ENCODE measurements at regions of chr2 and their contacts with region 1.

Region 1: GRCh38 chr2:85707304-85707703 is 13.1 kb downstream of the GNLY start:
- DNase-seq: peak; percentile 74
- H3K4me3 Mint-ChIP-seq: no peak overlapping the region
- H3K27ac Mint-ChIP-seq: peak overlapping the region; percentile 39
- H3K4me1 Mint-ChIP-seq: peaks cover 46% of the 10 kb centered on the region
- H3K27me3 Mint-ChIP-seq: peaks cover 41% of the 10 kb centered on the region

Region 2: DNA sequence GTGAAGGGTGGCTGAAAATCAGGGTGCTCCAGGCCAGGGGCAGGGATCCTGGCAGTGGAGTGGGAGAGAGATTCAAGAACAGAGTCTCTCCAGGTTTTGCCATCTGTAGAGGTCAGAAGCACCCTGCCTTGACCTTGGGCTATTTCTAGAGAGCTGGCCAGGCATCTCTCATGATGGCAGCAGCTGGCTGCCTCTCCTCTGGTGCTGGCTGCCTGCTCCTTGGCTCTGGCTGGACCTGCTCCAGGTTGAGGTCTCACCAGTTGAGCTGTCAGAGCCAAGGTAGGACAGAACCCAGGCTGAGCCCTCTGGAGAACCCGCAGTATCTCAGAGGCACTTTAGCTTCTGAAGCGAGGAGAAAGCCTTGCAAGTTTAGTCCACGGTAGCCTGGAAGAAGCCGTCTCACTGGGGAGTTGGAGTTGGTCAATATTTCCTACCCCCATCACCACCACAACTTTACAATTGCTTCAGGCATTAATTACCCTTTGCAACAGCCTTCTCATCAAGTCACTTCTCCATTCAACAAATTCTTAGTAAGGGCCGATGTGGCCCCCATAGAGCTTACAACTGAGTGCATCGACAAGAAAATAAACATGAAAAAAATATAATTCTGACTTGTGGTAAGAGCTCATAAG is 12.4 kb after region 1 on chr2:
- CTCF ChIA-PET with region 1: interaction called, 13 read pairs
- DNase-seq: no peak
- H3K4me3 Mint-ChIP-seq: no peak overlapping the region
- H3K27ac Mint-ChIP-seq: no peak overlapping the region
- H3K4me1 Mint-ChIP-seq: peaks cover 21% of the 10 kb centered on the region
- H3K27me3 Mint-ChIP-seq: peaks cover 57% of the 10 kb centered on the region

Region 3: GRCh38 chr2:85744055-85744454 is 36.8 kb after region 1 on chr2:
- CTCF ChIA-PET with region 1: no interaction called
- DNase-seq: no peak
- H3K4me3 Mint-ChIP-seq: no peak overlapping the region
- H3K27ac Mint-ChIP-seq: peak overlapping the region; percentile 9
- H3K4me1 Mint-ChIP-seq: no peaks in the 10 kb centered on the region
- H3K27me3 Mint-ChIP-seq: peaks cover 97% of the 10 kb centered on the region

Region 4: GRCh38 chr2:85865539-85866164 is 158.3 kb after region 1 on chr2:
- CTCF ChIA-PET with region 1: no interaction called
- DNase-seq: no peak
- H3K4me3 Mint-ChIP-seq: no peak overlapping the region
- H3K27ac Mint-ChIP-seq: peak overlapping the region; percentile 7
- H3K4me1 Mint-ChIP-seq: peaks cover 57% of the 10 kb centered on the region
- H3K27me3 Mint-ChIP-seq: no peaks in the 10 kb centered on the region

Region 5: GRCh38 chr2:85878719-85879385 is 171.5 kb after region 1 on chr2:
- CTCF ChIA-PET with region 1: no interaction called
- DNase-seq: no peak
- H3K4me3 Mint-ChIP-seq: no peak overlapping the region
- H3K27ac Mint-ChIP-seq: peak overlapping the region; percentile 0
- H3K4me1 Mint-ChIP-seq: peaks cover 64% of the 10 kb centered on the region
- H3K27me3 Mint-ChIP-seq: no peaks in the 10 kb centered on the region

Measured in activated naive CD4-positive, alpha-beta T cell treated with anti-CD3 and anti-CD28 coated beads, Interleukin-2, amount 10 ng/mL, durations not matched to agents 7 days and 5 days (primary cell).